ENCODE measurements at regions of chr17 and their contacts with region 1.

Region 1: DNA sequence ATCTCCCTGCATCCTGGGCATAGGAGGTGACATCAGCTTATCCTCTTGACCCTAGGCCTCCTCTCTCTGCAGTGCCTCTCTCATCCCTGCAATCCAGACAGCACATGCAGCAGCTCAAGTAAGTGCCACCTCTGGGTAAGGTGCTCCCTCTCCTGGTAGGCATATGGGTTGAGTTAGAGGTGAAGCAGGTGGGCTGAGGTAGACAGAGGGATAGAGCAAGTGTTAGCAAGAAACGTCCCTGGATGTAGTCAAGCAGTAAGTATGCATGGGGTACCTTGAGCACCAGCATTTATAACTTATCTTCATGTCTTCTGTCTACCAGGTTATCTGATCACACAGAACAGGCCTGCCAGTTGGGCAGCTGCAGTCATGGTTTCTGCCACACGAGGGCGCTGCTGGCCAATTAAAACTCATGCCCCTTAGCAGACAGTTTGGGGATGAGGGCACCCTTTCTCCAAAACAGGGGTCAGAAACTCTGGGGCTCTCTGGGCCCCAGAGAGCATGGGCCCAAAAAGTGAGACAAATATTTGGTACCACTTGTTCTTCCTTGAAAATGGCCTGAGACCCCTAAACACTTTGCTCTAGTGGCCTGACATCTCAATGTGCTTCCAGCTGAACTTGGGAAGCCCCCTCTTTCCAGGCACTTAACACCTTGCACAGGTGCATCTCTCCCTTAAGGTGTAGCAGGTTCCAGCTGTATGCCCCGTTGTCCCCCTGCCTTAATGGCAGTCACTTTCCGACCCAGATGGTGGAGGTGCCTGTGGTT is 59.8 kb downstream of the NEUROD2 start:
- DNase-seq: no peak
- H3K4me3 ChIP-seq: no peak overlapping the region
- CTCF ChIP-seq: peak; percentile 82

Region 2: GRCh38 chr17:39473310-39473709 is 74.6 kb before region 1 on chr17:
- CTCF ChIA-PET with region 1: no interaction called
- POLR2A ChIA-PET with region 1: no interaction called
- DNase-seq: no peak
- H3K4me3 ChIP-seq: no peak overlapping the region
- CTCF ChIP-seq: no peak

Region 3: GRCh38 chr17:39527220-39527813 is 20.6 kb before region 1 on chr17:
- CTCF ChIA-PET with region 1: interaction called, 11 read pairs
- POLR2A ChIA-PET with region 1: no interaction called
- DNase-seq: no peak
- H3K4me3 ChIP-seq: no peak overlapping the region
- CTCF ChIP-seq: peak; percentile 39

Region 4: DNA sequence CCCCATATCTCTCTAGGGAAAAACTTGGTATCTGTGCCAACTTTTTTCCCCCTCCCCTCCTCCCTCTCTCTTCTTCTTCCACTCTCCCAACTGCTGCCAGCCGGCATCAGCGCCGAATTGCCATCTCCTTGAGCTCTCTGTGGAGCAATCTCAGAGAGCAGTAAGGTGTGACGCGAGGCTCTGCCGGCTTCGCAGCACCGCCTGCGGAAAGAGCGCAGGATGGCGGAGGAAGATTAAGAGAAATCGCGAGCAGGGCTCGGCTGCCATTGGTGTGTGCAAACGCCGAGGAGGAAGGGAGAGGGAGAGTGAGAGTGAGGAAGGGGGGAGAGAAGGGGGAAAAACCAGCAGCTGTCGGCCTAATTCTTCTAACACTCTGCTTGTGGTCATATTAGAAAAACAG is 15.6 kb after region 1 on chr17:
- CTCF ChIA-PET with region 1: interaction called, 86 read pairs
- POLR2A ChIA-PET with region 1: no interaction called
- DNase-seq: no peak
- H3K4me3 ChIP-seq: no peak overlapping the region
- CTCF ChIP-seq: no peak

Region 5: DNA sequence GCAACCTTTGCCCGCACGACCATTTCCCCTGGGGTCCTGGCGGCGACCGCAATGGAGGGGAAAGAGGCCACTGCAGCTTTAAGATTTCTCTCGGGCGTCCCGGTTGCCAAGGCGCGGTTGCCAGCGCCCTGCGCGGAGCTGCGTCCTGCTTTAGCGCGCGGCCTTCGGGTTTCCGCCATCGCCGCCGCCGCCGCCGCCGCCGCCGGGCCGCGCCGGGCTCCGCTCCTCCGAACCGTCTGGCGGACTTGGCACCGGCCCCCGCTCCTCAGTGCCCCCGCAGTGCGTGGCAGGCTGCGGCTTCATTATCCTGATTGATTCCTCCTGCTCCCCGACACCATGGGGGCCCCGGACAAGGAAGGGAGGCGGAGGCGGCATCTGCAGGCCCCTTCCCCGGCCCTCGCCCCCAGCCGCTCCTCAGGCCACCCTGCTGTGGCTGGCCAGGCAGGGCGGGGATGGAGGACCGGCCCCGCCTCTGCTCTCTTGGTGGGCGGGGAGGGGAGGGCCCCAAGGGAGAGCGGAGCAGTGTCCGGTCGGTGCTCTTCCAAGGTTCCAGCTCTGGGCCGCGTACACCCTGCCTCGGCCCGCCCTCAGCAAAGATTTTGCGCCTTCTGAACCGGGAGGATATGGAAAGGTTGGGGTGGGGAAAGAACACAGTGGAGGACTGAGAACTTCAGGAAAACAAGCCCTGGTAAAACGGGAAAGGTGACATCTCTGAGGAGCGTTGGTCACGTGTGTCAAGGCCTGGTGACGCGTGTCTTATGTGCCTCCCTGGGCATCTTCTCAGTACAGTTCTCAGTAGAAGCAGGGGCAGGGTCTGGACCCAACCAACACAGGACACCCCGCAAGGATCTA is 25.8 kb after region 1 on chr17:
- CTCF ChIA-PET with region 1: interaction called, 18 read pairs
- POLR2A ChIA-PET with region 1: no interaction called
- DNase-seq: no peak
- H3K4me3 ChIP-seq: peak overlapping the region; percentile 66
- CTCF ChIP-seq: no peak

Region 6: DNA sequence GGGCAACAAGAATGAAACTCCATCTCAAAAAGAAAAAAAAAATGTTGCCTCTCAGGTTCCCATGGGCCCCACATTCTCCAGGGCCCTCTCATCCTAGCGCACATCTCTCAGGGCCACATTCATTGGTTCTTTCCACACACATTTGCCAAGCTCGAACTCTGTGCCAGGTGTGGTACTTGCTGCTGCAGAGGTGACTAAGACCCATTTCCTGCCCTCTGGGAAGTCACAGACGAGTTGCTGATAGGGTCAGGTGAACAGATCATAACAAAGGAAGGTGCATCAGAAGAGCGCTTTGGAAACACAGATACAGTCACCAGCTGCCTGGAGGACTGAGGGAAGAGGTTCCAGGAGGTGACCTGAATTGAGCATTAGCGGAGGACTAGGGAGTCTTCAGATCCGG is 415.9 kb after region 1 on chr17:
- CTCF ChIA-PET with region 1: no interaction called
- POLR2A ChIA-PET with region 1: no interaction called
- DNase-seq: no peak
- H3K4me3 ChIP-seq: no peak overlapping the region
- CTCF ChIP-seq: no peak